ENCODE measurements at regions of chr17 and their contacts with region 1.

Region 1: DNA sequence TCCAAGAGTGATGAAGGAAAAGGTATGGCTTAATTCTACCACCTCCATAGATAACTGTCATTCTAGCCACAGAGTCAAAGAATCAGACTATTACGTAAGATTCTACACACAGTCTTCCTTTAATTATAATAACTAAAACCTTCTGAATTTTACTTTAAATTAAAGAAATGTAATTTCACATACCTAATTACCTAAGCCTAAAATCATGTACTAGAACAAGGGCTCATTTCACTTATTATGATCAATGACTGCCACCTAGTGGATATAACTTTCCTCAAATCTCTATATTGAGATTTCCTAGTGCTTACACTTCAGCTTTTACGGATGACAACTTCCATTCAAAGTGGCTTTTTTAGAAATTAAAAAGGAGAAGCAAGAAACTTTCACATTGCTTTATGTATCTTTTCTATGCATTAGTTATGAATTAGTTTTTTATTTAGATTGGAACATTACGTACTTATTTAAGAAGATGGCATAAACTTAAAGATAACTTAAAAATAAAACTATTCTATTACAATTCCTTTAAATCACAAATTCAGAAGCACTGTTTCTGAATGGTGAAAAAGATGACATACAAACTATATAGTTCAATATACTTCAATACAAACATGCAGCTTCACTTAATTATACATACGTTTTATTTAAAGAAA is 18.2 kb upstream of the ABCA10 start:
- DNase-seq: peak in 6 of 9 donors; percentile 2 to 37 (median 26)
- ATAC-seq: no peak
- H3K4me3 ChIP-seq: no peak overlapping the region
- H3K4me3 Mint-ChIP-seq: no peak overlapping the region
- H3K27ac ChIP-seq: no peak overlapping the region
- H3K27ac Mint-ChIP-seq: no peak overlapping the region
- H3K4me1 ChIP-seq: no peaks in the 10 kb centered on the region
- H3K4me1 Mint-ChIP-seq: peaks cover 0 to 4% (median 0%) of the 10 kb centered on the region in 7 donors
- H3K27me3 ChIP-seq: no peaks in the 10 kb centered on the region
- H3K27me3 Mint-ChIP-seq: no peaks in the 10 kb centered on the region

Region 2: DNA sequence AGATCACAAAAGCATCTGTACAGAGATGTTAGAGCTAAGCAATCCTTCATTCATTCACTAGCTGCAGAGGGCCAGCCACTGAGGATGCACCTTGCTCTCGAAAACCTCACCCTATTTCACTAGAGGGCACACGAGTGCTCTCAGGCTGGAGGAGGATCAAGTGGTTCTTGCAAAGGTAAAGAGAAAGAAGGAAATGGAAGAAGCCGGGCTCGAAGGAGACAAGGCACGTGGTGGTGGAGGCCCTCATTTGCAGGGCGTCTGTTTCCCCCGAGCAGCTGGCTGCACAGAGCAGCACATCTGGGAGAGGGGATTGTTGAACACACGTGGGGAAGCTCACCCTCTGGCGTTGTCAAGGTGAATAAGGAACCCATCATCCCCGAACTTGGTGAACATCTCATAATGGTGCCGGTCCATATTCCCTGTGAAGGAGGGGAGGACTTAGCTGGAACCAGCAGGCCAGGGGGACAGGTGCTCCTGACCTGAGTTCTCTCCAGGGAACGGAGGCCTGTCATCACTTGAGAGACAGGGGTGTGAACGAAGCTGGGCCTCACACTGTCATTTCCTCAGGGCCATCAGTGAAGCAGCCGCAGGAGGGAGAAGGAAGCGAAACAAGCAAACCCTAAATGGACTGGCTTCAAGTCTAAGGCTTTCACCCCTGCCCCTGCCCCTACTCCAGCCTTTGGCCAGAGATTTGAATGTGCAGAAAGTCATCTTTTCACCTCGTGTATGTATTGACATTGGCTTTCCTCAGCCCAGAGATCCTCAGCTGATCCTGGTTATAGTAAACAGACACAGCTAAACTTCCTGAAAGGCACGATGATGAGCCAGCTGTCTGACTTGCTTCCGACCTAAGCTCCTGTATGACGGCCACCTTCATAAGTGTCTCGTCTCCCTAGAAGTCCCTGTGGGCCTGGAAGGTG is 707.0 kb before region 1 on chr17:
- CTCF ChIA-PET with region 1: no interaction called
- POLR2A ChIA-PET with region 1: no interaction called
- intact Hi-C with region 1: loop called (anchors 5 to 10 kb)
- DNase-seq: no peak
- ATAC-seq: peak; percentile 37
- H3K4me3 ChIP-seq: no peak overlapping the region
- H3K4me3 Mint-ChIP-seq: no peak overlapping the region
- H3K27ac ChIP-seq: no peak overlapping the region
- H3K27ac Mint-ChIP-seq: peak overlapping the region in 5 of 9 donors; percentile 48 to 78 (median 54)
- H3K4me1 ChIP-seq: no peaks in the 10 kb centered on the region
- H3K4me1 Mint-ChIP-seq: peaks cover 0 to 9% (median 4%) of the 10 kb centered on the region in 7 donors
- H3K27me3 ChIP-seq: no peaks in the 10 kb centered on the region
- H3K27me3 Mint-ChIP-seq: no peaks in the 10 kb centered on the region

Region 3: DNA sequence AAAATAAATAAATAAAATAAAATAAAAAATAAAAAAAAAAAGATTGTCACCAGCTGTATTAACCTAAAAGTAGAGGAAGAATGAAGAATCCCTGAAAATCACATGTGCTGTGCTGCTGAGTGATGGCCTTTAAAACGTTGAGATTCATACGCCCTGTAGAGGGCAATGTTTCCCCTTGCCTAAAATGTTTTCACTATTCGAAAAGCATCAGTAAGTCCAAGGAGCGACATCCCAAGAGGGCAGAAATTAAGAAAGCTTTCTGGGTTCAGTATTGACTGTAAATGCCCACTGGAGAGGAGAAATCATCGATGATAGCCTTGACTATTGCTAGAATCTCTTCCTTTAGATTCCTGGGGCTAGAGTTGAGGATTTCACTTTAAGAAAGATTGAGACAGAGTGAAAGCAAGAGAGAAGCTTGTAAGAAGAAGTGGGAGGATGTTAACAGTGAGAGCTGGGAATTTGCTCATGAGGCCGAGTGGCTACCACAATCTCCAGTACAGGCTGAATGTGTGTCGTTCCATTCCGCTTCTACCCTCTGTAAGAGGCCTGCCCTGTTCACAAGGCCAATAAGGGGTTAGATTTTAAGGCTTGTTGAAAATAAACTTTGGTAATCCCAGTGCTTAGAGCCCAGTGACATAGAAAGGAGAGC is 474.9 kb before region 1 on chr17:
- CTCF ChIA-PET with region 1: interaction called, 8 read pairs
- POLR2A ChIA-PET with region 1: no interaction called
- intact Hi-C with region 1: loop called (anchors 1 kb)
- DNase-seq: peak in 2 of 9 donors; percentile 7 to 9
- ATAC-seq: peak; percentile 77
- H3K4me3 ChIP-seq: no peak overlapping the region
- H3K4me3 Mint-ChIP-seq: peak overlapping the region in 8 of 10 donors; percentile 12 to 68 (median 38)
- H3K27ac ChIP-seq: no peak overlapping the region
- H3K27ac Mint-ChIP-seq: no peak overlapping the region
- H3K4me1 ChIP-seq: no peaks in the 10 kb centered on the region
- H3K4me1 Mint-ChIP-seq: peaks cover 0 to 5% (median 0%) of the 10 kb centered on the region in 7 donors
- H3K27me3 ChIP-seq: no peaks in the 10 kb centered on the region
- H3K27me3 Mint-ChIP-seq: peaks cover 0 to 5% (median 0%) of the 10 kb centered on the region in 5 donors

Region 4: GRCh38 chr17:68777243-68777855 is 469.5 kb before region 1 on chr17:
- CTCF ChIA-PET with region 1: interaction called, 8 read pairs
- POLR2A ChIA-PET with region 1: no interaction called
- intact Hi-C with region 1: loop called (anchors 1 kb)
- DNase-seq: peak in 4 of 9 donors; percentile 16 to 42 (median 26)
- ATAC-seq: no peak
- H3K4me3 ChIP-seq: no peak overlapping the region
- H3K4me3 Mint-ChIP-seq: no peak overlapping the region
- H3K27ac ChIP-seq: no peak overlapping the region
- H3K27ac Mint-ChIP-seq: no peak overlapping the region
- H3K4me1 ChIP-seq: no peaks in the 10 kb centered on the region
- H3K4me1 Mint-ChIP-seq: no peaks in the 10 kb centered on the region
- H3K27me3 ChIP-seq: peaks cover 0 to 4% of the 10 kb centered on the region in 2 donors
- H3K27me3 Mint-ChIP-seq: peaks cover 6 to 22% (median 13%) of the 10 kb centered on the region in 5 donors

Region 5: GRCh38 chr17:69287168-69287567 is 40.3 kb after region 1 on chr17:
- CTCF ChIA-PET with region 1: interaction called, 3 read pairs
- POLR2A ChIA-PET with region 1: no interaction called
- intact Hi-C with region 1: loop called in 1 of 2 experiments (anchors 2 kb)
- DNase-seq: no peak
- ATAC-seq: no peak
- H3K4me3 ChIP-seq: no peak overlapping the region
- H3K4me3 Mint-ChIP-seq: no peak overlapping the region
- H3K27ac ChIP-seq: no peak overlapping the region
- H3K27ac Mint-ChIP-seq: no peak overlapping the region
- H3K4me1 ChIP-seq: no peaks in the 10 kb centered on the region
- H3K4me1 Mint-ChIP-seq: no peaks in the 10 kb centered on the region
- H3K27me3 ChIP-seq: no peaks in the 10 kb centered on the region
- H3K27me3 Mint-ChIP-seq: no peaks in the 10 kb centered on the region